ENCODE measurements at regions of chr14 and their contacts with region 1.

Region 1: DNA sequence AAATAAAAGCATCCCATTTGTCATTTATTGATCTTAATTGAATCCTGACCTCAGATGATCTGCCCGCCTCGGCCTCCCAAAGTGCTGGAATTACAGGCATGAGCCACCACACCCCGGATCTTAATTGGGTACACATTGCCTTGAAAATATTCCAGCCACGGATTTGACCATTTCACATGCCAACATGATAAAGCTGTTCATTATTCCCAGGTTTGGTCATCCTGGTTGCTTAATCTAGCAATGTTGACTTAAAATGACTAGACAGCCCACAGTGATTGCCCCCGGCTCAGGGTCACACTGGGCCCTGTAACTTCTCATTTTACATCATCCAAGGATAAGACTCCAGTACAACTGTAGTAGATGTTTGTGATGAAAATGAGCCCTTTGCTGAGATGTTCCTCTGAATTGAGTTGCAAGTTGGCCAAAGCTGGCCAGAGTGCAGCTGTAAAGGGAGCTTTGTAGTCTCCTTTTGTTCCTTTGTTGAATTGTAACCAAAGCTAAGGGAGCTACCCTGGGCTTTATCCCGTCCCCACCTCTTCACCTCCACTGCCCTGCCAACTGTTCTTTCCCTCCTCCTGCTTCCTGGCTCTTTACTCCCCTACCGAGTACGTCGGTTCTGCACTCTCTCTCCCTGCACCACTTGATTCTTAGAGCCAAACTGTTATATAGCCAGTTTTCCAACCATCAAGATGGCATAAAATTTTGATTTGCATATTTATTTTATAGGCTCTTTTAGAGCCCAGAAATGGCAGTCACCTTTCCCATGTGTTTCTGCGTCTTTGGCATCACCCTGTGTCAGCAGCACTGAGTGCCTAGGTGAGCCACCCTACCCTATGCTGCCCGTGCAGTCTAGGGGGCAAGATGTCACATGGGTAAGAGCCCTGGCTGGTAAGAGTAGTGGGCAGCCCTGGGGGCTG is 141.3 kb upstream of the HIF1A start:
- DNase-seq: no peak
- ATAC-seq: no peak
- H3K4me3 Mint-ChIP-seq: peak overlapping the region; percentile 75
- H3K27ac Mint-ChIP-seq: peak overlapping the region; percentile 97
- H3K4me1 Mint-ChIP-seq: peaks cover 67% of the 10 kb centered on the region
- H3K27me3 Mint-ChIP-seq: no peaks in the 10 kb centered on the region
- CTCF ChIP-seq: no peak

Region 2: GRCh38 chr14:61525293-61526011 is 28.5 kb before region 1 on chr14:
- CTCF ChIA-PET with region 1: no interaction called
- POLR2A ChIA-PET with region 1: interaction called, 3 read pairs
- intact Hi-C with region 1: loop called (anchors 1 kb)
- DNase-seq: no peak
- ATAC-seq: peak; percentile 69
- H3K4me3 Mint-ChIP-seq: no peak overlapping the region
- H3K27ac Mint-ChIP-seq: no peak overlapping the region
- H3K4me1 Mint-ChIP-seq: peaks cover 5% of the 10 kb centered on the region
- H3K27me3 Mint-ChIP-seq: no peaks in the 10 kb centered on the region
- CTCF ChIP-seq: no peak

Region 3: DNA sequence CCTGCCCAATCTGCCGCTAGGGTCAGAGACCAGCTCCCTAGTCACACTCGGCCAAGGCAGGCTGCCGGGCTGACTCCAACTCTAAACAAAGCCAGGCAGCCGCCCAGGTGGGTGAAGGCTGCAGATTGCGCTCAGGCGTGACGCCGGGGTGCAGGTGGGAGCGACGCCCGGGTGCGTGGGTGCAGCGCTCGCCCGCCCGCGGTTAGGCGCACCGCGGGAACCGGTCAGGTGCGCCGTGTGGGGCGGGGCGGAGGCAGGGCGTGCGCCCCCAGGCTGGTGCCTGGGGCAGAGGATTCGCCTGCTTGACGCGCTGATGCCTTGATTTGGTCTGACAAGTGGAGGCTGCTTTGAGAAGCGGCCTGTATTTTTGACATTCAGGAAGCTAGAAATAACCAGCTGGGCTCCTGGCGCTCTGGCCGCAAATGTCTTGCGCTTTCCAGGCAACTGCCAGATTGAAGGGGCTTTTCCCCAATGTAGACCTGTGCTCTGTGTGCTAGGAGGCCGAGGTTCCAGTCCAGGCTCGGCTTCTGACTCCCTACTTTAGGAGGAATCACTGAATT is 14.7 kb after region 1 on chr14:
- CTCF ChIA-PET with region 1: interaction called, 5 read pairs
- POLR2A ChIA-PET with region 1: interaction called, 21 read pairs
- intact Hi-C with region 1: loop called (anchors 1 kb)
- DNase-seq: peak; percentile 74
- ATAC-seq: peak; percentile 89
- H3K4me3 Mint-ChIP-seq: peak overlapping the region; percentile 83
- H3K27ac Mint-ChIP-seq: peak overlapping the region; percentile 80
- H3K4me1 Mint-ChIP-seq: peaks cover 58% of the 10 kb centered on the region
- H3K27me3 Mint-ChIP-seq: no peaks in the 10 kb centered on the region
- CTCF ChIP-seq: no peak

Region 4: DNA sequence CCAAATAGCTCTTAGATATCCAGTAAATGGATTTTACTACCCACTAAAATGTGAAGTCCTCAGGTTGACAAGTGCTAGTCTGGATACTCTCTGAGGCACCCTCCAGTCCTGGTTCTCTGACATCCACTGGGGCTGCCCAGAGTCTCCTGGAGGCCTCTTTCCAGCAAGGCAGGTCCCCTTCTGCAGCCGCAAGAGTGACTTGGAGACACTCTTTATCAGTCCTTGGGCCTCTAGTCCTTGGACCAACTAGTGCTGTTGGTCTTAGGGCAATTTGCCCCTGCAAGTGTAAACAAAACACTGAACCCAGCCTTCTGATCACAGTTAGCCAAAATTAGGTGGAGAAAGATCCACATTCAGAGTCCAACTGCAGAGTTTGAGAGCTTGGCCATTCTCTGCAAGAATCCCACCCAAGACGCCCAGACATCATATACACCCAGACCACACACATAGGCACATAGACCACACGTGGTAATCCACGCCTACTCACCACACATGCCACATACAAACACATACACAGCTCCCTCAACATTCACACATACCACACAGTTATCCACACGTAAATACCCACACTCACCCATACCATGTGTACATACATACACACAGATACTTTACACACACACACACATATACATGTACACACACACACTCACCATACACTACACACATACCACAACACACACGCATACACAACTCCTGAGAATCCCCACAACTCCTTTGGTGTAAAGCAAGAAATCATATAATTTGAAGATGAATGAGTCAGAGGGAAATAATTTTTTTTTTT is 41.4 kb after region 1 on chr14:
- CTCF ChIA-PET with region 1: no interaction called
- POLR2A ChIA-PET with region 1: no interaction called
- intact Hi-C with region 1: loop called (anchors 2 kb)
- DNase-seq: no peak
- ATAC-seq: no peak
- H3K4me3 Mint-ChIP-seq: no peak overlapping the region
- H3K27ac Mint-ChIP-seq: no peak overlapping the region
- H3K4me1 Mint-ChIP-seq: peaks cover 43% of the 10 kb centered on the region
- H3K27me3 Mint-ChIP-seq: no peaks in the 10 kb centered on the region
- CTCF ChIP-seq: no peak

Region 5: DNA sequence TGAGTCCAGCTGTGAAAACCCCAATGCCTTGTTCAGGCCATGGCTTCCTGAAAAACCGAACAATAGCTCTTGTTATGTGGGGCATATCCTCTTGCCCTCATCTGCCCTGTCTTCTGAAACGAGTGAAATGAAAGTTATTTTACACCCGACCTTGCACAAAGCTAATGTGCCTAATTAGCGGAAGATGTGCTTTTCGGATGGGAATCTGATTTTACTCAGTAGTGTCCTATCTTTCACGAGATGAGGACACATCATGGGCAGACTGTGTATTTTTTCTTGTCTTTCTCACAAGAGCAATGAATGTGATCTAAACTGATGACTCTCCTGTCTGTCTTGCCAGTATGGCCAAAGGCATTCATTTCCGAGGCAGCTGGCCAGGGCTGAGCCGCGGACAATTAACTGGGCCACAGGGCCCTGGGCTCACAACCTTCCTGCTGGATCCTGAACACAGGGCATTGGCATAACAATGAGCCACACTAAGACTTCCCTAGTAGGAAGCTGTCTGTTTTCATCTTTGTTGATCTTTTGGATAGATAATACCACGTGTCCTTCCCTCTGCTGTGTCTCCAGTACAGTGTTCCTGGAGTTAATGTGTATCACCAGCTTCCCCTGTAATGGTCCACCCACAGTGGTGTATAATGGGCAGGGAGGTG is 55.3 kb after region 1 on chr14:
- CTCF ChIA-PET with region 1: no interaction called
- POLR2A ChIA-PET with region 1: no interaction called
- intact Hi-C with region 1: no loop called
- DNase-seq: no peak
- ATAC-seq: no peak
- H3K4me3 Mint-ChIP-seq: no peak overlapping the region
- H3K27ac Mint-ChIP-seq: no peak overlapping the region
- H3K4me1 Mint-ChIP-seq: peaks cover 10% of the 10 kb centered on the region
- H3K27me3 Mint-ChIP-seq: no peaks in the 10 kb centered on the region
- CTCF ChIP-seq: no peak